Activated B cell treated with CpG ODN at 0.5 μM for 24 hours (primary cell): ENCODE measurements at regions of chr3 and their contacts with region 1.

Region 1: DNA sequence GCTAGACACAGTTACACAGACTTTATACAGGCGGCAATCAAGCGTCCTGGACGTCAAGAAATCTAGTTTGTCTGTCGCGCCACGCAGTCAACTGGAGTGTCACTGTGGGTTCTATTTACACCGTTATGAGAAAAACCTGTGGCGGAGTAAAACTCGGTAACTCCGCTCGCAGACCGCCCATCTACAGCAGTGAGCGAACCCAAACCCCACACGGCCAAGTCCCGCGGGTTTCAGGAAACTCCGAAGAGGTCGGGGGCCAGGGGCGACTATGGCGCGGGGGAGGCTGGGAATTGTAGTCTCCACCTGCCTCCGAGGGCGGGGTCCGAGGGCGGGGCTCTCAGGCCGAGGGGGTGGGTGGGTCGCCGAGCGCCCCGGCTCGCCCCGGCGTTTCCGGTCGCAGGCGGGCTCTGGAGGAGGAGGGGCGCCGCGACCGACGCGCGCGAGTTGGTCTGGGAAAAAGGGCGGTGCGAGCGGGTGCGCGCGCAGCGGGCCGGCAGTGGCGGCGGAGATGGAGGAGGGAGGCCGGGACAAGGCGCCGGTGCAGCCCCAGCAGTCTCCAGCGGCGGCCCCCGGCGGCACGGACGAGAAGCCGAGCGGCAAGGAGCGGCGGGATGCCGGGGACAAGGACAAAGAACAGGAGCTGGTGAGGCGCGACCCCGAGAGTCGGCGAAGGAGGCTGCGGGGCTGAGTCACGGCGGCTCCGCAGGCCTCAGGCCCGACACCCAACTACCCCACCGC is at the start of gene PSMD2:
- DNase-seq: peak; percentile 96
- ATAC-seq: peak; percentile 96
- H3K4me3 Mint-ChIP-seq: peak within 1 kb of the TSS; percentile 95
- H3K27ac Mint-ChIP-seq: peak within 1 kb of the TSS; percentile 88
- H3K4me1 Mint-ChIP-seq: peaks cover 23% of the 10 kb centered on the region
- H3K27me3 Mint-ChIP-seq: no peaks in the 10 kb centered on the region
- CTCF ChIP-seq: no peak
- total RNA-seq, gene PSMD2: 206 and 210 TPM in 2 replicates

Region 2: GRCh38 chr3:184017672-184018423 is 281.1 kb before region 1 on chr3 and contains the start of gene ABCC5:
- CTCF ChIA-PET with region 1: no interaction called
- POLR2A ChIA-PET with region 1: no interaction called
- intact Hi-C with region 1: loop called (anchors 1 kb)
- DNase-seq: peak; percentile 70
- ATAC-seq: peak; percentile 96
- H3K4me3 Mint-ChIP-seq: peak within 1 kb of the TSS; percentile 100
- H3K27ac Mint-ChIP-seq: peak within 1 kb of the TSS; percentile 84
- H3K4me1 Mint-ChIP-seq: peaks cover 13% of the 10 kb centered on the region
- H3K27me3 Mint-ChIP-seq: peaks cover 12% of the 10 kb centered on the region
- CTCF ChIP-seq: peak; percentile 7
- total RNA-seq, gene ABCC5: 10.6 and 11.1 TPM in 2 replicates

Region 3: DNA sequence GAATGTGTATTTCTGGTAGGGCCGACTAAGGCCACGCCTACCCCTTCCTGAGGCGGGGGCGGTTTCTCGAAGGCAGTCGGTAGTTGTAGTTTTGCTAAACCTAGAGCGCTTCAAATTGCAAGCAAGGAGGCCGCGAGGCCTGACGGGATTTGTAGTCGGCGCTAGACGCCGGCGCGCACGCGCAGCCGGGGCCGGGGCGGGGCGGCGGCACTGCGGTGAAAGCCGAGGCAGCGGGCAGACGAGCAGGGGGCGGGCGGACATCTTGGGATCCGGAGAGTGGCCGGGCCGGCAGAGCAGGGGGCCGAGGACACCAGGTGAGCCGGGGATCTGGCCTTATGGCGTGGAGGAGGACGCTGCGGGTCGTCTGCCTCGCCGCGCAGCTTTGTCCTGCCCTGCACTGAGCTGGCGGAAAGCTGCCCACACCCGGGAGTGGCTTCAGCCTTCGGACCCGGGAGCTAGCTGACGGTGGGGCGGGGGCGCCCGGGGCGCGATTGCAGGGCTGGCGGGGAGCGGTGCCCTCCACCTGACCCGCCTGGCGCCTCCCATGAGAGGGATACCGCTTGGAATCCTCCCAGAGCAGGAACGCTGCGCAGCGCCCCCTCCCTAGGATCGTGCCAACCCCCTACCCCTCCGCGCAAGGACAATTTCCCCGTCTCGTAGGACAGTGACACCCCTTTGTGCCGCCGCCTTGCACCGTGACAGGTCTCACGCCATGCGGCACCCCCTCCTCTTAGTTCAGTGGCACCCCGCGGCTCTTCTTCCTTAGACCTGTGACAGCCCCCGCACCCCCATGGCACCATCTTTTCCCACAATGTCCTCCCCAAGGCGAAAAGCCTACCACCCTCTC is 124.1 kb before region 1 on chr3 and contains the start of gene AP2M1:
- CTCF ChIA-PET with region 1: no interaction called
- POLR2A ChIA-PET with region 1: no interaction called
- intact Hi-C with region 1: loop called (anchors 1 kb)
- DNase-seq: peak; percentile 99
- ATAC-seq: peak; percentile 97
- H3K4me3 Mint-ChIP-seq: peak within 1 kb of the TSS; percentile 90
- H3K27ac Mint-ChIP-seq: peak within 1 kb of the TSS; percentile 75
- H3K4me1 Mint-ChIP-seq: peaks cover 37% of the 10 kb centered on the region
- H3K27me3 Mint-ChIP-seq: no peaks in the 10 kb centered on the region
- CTCF ChIP-seq: no peak
- total RNA-seq, gene AP2M1: 169 and 177 TPM in 2 replicates

Region 4: GRCh38 chr3:184261270-184261853 is 37.6 kb before region 1 on chr3 and contains the start of gene CAMK2N2:
- CTCF ChIA-PET with region 1: no interaction called
- POLR2A ChIA-PET with region 1: no interaction called
- intact Hi-C with region 1: loop called (anchors 2 kb)
- DNase-seq: peak; percentile 43
- ATAC-seq: peak; percentile 66
- H3K4me3 Mint-ChIP-seq: peak within 1 kb of the TSS; percentile 79
- H3K27ac Mint-ChIP-seq: no peak within 1 kb of the TSS
- H3K4me1 Mint-ChIP-seq: peaks cover 28% of the 10 kb centered on the region
- H3K27me3 Mint-ChIP-seq: peaks cover 51% of the 10 kb centered on the region
- CTCF ChIP-seq: no peak
- total RNA-seq, gene CAMK2N2: not detected in 2 replicates

Region 5: DNA sequence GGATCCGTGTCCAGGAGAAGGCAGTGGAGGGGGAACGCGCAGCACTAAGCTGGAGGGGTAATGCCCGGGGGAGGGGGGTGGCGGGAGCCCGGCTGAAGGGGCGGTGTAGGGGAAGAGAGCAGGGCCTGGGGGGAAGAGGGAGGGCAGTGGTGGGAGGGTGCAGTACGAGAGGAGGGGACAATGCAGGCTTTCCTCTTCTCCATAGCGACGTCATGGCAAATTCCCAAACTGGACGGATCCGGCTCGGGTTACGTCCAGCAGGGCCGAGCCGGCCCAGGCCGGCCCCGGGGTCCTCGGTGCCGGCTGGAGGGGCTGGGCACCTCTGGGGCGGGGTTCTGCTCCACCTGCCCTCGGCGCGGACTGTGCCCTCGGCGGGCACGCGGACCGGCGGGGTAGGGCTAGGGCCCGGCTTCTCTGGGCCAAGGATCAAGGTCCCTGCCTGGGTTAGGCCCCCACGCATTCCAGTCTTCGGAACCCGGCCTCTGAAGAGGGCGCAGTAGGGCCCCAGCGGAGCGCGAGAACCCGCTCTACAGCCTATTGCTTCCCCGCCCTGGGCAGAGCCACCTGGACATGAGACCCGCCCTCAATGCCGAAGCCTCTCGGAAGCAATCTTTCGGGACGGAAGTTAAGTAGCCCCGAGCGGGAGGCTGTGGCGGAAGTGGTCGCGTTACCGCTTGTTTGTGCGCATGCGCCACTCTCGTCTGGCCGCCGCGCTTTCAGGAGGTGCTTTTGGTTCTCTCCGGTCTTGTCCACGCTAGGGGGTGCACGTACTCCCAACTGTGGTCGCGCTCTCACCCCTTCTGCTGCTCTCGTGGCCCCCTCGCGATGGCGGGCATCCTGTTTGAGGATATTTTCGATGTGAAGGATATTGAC is 64.0 kb after region 1 on chr3:
- CTCF ChIA-PET with region 1: no interaction called
- POLR2A ChIA-PET with region 1: no interaction called
- intact Hi-C with region 1: loop called (anchors 1 kb)
- DNase-seq: peak; percentile 93
- ATAC-seq: peak; percentile 86
- H3K4me3 Mint-ChIP-seq: peak overlapping the region; percentile 96
- H3K27ac Mint-ChIP-seq: peak overlapping the region; percentile 95
- H3K4me1 Mint-ChIP-seq: peaks cover 25% of the 10 kb centered on the region
- H3K27me3 Mint-ChIP-seq: no peaks in the 10 kb centered on the region
- CTCF ChIP-seq: no peak